PC-3 (cell line): ENCODE measurements at regions of chr20 and their contacts with region 1.

Region 1: DNA sequence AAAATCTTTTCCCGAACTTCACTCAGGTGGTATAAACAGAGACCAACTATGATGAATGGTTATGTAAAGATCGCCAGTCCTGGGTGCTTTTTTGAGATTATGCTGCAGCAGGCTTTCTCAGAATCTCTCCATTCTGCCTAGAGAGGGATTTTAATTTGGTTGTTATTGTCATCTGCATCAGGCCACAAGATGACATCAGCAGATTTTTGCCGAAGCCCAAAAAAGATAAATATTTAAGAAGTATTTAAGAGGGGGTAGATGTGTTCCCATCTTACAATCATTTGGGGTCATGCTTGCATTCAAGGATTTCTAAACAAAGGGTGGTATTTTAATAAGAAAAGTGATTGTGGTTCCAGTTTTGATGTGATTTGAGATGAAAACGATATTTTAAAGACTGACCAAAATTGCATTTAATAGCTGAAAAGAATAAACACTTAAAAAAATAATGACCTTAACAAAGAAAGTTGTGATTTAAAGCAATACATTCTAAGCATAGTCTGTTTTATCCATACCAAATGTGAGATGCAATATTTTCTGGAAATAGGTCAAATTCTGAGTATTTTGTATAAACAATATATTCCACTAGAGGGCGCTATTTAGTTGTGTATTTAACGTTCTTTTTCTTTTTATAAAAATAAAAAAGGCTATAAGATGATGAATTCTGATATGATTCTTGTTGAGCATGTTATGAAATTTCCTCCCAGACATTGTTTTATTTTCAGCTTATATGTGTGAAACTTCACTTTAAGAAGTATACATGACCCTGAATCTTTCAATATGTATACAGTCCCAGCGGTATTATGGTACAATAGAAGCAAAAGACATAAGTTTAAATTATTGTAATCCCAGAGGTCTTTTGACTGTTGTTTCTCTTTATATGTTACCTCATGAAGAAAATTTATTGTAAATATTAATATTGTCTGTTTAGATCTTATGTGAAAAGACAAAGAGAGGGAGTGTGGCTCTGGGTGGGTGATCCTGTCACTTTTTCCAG is 51.0 kb upstream of the ZFP64 start:
- DNase-seq: peak; percentile 85
- ATAC-seq: no peak
- H3K4me3 ChIP-seq: no peak overlapping the region
- H3K27ac ChIP-seq: no peak overlapping the region
- H3K4me1 ChIP-seq: no peaks in the 10 kb centered on the region
- H3K27me3 ChIP-seq: peaks cover 41% of the 10 kb centered on the region
- CTCF ChIP-seq: peak; percentile 90

Region 2: DNA sequence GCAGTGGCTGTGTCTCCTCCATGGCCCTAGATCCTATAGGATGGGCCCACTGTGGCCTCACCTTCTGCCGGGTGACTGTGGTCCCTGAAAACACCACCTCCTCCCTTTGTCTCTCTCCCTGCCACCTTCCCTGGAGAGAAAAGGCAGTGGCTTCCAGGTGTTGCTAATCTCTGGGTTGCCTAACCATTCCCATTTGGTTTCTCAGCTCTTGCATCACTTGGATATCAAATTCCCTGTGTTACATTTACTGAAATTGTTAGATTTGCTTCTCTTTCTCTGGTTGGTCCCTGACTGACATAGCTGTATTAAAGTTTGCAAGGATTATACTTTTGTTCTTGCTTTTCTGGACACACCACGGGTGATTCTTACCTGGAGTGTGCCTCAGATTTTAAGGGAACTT is 41.7 kb before region 1 on chr20:
- CTCF ChIA-PET with region 1: no interaction called
- POLR2A ChIA-PET with region 1: no interaction called
- intact Hi-C with region 1: no loop called
- DNase-seq: no peak
- ATAC-seq: no peak
- H3K4me3 ChIP-seq: no peak overlapping the region
- H3K27ac ChIP-seq: no peak overlapping the region
- H3K4me1 ChIP-seq: no peaks in the 10 kb centered on the region
- H3K27me3 ChIP-seq: no peaks in the 10 kb centered on the region
- CTCF ChIP-seq: no peak

Region 3: DNA sequence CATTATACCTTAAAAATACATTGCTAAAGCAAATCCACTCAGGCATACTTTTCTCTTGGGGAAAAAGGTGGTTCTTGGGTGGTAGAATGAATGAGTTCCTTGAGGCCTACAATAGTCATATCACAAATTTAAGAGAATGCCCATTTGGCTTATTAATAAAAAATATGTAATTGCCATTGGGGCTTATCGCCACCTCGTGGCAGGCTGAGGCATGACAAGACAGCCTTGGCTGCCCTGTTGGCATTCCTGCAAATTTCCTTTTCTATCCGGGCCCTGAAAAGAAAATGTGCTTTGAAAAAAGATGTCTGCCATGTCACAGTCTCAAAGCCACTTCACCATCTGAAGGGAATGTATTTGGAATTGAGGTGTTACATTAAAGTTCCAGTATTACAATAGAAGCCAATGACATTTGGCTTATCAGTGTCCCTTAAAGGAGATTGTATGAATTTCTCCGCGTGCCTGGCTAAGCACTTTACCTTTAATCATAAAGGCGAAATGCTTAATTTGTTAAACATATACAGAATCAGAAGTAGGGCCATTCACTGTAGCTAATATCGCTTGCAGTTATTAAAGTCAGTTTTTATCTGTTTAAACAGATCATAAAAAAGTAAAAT is 137.3 kb after region 1 on chr20:
- CTCF ChIA-PET with region 1: no interaction called
- POLR2A ChIA-PET with region 1: no interaction called
- intact Hi-C with region 1: loop called (anchors 2 kb)
- DNase-seq: peak; percentile 71
- ATAC-seq: no peak
- H3K4me3 ChIP-seq: no peak overlapping the region
- H3K27ac ChIP-seq: no peak overlapping the region
- H3K4me1 ChIP-seq: no peaks in the 10 kb centered on the region
- H3K27me3 ChIP-seq: peaks cover 25% of the 10 kb centered on the region; the same call in 1 of the 2 replicates
- CTCF ChIP-seq: peak; percentile 99

Region 4: GRCh38 chr20:53216856-53217576 is 974.5 kb after region 1 on chr20:
- CTCF ChIA-PET with region 1: no interaction called
- POLR2A ChIA-PET with region 1: no interaction called
- intact Hi-C with region 1: loop called (anchors 10 kb)
- DNase-seq: peak; percentile 81
- ATAC-seq: peak; percentile 93
- H3K4me3 ChIP-seq: no peak overlapping the region
- H3K27ac ChIP-seq: no peak overlapping the region
- H3K4me1 ChIP-seq: no peaks in the 10 kb centered on the region
- H3K27me3 ChIP-seq: peaks cover 80% of the 10 kb centered on the region
- CTCF ChIP-seq: peak; percentile 99